ENCODE measurements at regions of chr6 and their contacts with region 1.

Region 1: GRCh38 chr6:12637960-12638641 is 78.5 kb upstream of the PHACTR1 start:
- DNase-seq: peak; percentile 30
- H3K4me3 ChIP-seq: no peak overlapping the region
- H3K27me3 ChIP-seq: no peaks in the 10 kb centered on the region
- CTCF ChIP-seq: peak; percentile 91

Region 2: DNA sequence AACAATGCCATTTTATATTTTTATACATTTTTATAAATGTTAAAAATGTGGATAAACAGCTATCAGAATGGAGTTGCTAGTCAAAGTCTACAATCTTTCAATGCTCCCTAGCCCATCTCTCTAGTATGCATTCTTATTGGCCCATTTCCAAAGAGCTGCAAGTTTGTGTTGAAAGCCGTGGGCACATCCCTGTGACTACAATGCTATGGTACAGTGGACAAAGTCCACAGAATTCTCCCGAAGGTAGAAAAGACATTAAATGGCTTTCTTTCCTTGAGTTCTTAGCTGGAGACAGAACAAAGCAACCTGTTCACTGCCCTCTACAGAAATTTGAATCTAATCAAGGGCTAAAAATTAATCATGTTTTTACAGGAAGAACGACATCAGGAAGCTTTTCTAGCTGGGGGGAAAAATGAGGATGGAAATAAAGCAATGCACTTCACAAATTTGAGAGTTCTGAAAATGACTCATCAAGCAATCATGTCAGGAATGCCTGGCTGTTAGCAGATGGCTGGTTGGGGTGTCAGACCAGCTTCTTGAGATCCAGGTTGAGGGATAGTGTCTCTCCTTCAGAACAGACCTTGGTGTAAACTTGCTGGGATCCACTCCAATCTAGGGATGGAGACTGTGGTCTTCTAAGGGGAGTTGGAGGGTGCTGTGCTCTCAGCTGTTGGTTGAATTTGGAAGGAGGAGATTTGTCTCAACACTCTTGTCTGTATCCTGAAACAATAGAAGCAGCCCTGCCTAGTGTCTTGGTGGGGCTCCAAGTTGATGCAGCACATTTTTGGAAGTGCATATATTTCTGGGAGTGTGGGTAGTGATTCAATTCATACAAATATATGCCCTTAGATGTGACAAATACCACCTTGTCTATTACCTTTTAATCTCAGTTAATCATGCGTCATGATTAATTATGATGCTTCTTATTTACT is 64.9 kb before region 1 on chr6:
- CTCF ChIA-PET with region 1: no interaction called
- POLR2A ChIA-PET with region 1: no interaction called
- DNase-seq: peak; percentile 54
- H3K4me3 ChIP-seq: no peak overlapping the region
- H3K27me3 ChIP-seq: no peaks in the 10 kb centered on the region
- CTCF ChIP-seq: no peak

Region 3: DNA sequence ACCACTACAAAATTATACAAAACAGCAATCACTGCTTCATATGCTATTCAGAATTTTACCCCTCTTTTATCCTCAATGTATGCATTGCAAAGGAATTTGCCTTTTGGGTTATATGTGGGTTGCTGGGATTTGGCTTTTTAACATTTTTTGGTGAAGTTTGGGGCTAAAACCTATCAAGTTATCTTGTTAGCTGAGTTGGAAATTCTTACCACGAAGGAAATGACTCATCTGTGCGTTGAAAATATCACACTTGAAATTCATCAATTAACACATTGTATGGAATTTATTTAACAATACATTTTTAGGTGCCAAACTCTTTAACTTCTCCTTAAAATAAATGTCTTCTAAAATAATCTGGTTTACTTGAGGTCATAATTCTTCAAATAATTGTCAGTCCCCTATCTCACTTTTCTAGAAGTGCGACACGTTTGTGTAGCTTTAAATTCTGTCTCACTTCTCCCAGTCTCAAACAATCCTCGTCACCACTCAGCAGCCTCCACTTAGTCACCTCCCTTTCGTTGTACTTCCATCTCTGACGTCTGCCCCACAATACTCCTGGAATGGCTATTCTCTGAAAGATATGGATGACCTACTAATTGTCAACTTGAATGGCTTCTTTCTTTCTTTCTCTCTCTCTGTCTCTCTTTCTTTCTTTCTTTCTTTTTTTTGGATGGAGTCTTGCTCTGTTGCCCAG is 167.0 kb after region 1 on chr6:
- CTCF ChIA-PET with region 1: no interaction called
- POLR2A ChIA-PET with region 1: no interaction called
- DNase-seq: no peak
- H3K4me3 ChIP-seq: no peak overlapping the region
- H3K27me3 ChIP-seq: no peaks in the 10 kb centered on the region
- CTCF ChIP-seq: no peak

Region 4: DNA sequence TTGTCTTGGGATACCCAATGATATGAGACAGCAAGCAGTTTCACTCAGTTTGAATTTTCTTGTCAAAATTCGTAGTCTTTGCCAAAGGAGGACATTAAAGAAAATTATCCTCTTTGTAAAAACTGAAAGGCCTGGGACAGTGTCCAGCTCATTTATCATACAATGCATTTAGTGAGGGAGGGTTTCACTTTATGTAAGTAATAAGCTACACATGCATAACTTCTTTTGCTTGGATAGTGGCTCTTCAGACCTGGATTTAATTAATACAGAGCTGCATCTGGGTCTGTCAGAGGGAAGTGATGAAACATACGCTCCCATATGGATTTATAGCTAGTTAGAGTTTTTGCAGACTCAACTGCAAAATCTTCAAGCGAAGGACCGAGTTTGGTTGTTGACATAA is 254.1 kb after region 1 on chr6:
- CTCF ChIA-PET with region 1: interaction called, 83 read pairs
- POLR2A ChIA-PET with region 1: no interaction called
- DNase-seq: no peak
- H3K4me3 ChIP-seq: no peak overlapping the region
- H3K27me3 ChIP-seq: peaks cover 3% of the 10 kb centered on the region; the same call in 1 of the 2 replicates
- CTCF ChIP-seq: no peak

Measured in BJ (cell line).